Gastrocnemius medialis (tissue), 4 donors: ENCODE measurements at regions of chr2 and their contacts with region 1.

Region 1: GRCh38 chr2:105576440-105577252 is 168.1 kb upstream of the NCK2 start:
- DNase-seq: no peak
- ATAC-seq: peak; percentile 51 to 75
- H3K4me3 ChIP-seq: no peak overlapping the region
- H3K27ac ChIP-seq: peak overlapping the region in 1 of 4 donors; percentile 55
- H3K4me1 ChIP-seq: no peaks in the 10 kb centered on the region
- H3K27me3 ChIP-seq: no peaks in the 10 kb centered on the region
- CTCF ChIP-seq: peak in 4 of 5 experiments; percentile 22 to 64 (median 53)
- POLR2A ChIP-seq: no peak

Region 2: GRCh38 chr2:105379741-105380186 is 196.9 kb before region 1 on chr2:
- in situ Hi-C with region 1: no loop called
- intact Hi-C with region 1: no loop called
- DNase-seq: peak in 1 of 2 donors; percentile 66
- ATAC-seq: peak; percentile 57 to 66
- H3K4me3 ChIP-seq: no peak overlapping the region
- H3K27ac ChIP-seq: peak overlapping the region; percentile 61 to 81 (median 71)
- H3K4me1 ChIP-seq: peaks cover 89 to 94% of the 10 kb centered on the region in 2 donors
- H3K27me3 ChIP-seq: no peaks in the 10 kb centered on the region
- CTCF ChIP-seq: no peak
- POLR2A ChIP-seq: no peak

Region 3: GRCh38 chr2:105487142-105488069 is 89.2 kb before region 1 on chr2:
- in situ Hi-C with region 1: no loop called
- intact Hi-C with region 1: no loop called
- DNase-seq: peak in 1 of 2 donors; percentile 19
- ATAC-seq: peak in 1 of 2 donors; percentile 5
- H3K4me3 ChIP-seq: no peak overlapping the region
- H3K27ac ChIP-seq: peak overlapping the region; percentile 66 to 82 (median 76)
- H3K4me1 ChIP-seq: peaks cover 22 to 24% of the 10 kb centered on the region in 2 donors
- H3K27me3 ChIP-seq: no peaks in the 10 kb centered on the region
- CTCF ChIP-seq: no peak
- POLR2A ChIP-seq: no peak

Region 4: GRCh38 chr2:105498281-105498846 is 78.3 kb before region 1 on chr2:
- in situ Hi-C with region 1: no loop called
- intact Hi-C with region 1: no loop called
- DNase-seq: peak; percentile 51 to 67
- ATAC-seq: peak; percentile 81 to 84
- H3K4me3 ChIP-seq: no peak overlapping the region
- H3K27ac ChIP-seq: peak overlapping the region; percentile 66 to 81 (median 78)
- H3K4me1 ChIP-seq: peaks cover 42 to 46% of the 10 kb centered on the region in 2 donors
- H3K27me3 ChIP-seq: no peaks in the 10 kb centered on the region
- CTCF ChIP-seq: no peak
- POLR2A ChIP-seq: no peak

Region 5: GRCh38 chr2:106065268-106065982 is 488.8 kb after region 1 on chr2:
- in situ Hi-C with region 1: loop called in 1 of 4 experiments (anchors 10 kb)
- intact Hi-C with region 1: loop called (anchors 10 kb)
- DNase-seq: no peak
- ATAC-seq: peak in 1 of 2 donors; percentile 15
- H3K4me3 ChIP-seq: peak overlapping the region; percentile 48 to 60 (median 59)
- H3K27ac ChIP-seq: no peak overlapping the region
- H3K4me1 ChIP-seq: peaks cover 2 to 8% of the 10 kb centered on the region in 2 donors
- H3K27me3 ChIP-seq: no peaks in the 10 kb centered on the region
- CTCF ChIP-seq: no peak
- POLR2A ChIP-seq: no peak

Region 6: GRCh38 chr2:106073678-106074406 is 497.2 kb after region 1 on chr2:
- in situ Hi-C with region 1: loop called in 1 of 4 experiments (anchors 10 kb)
- intact Hi-C with region 1: loop called (anchors 10 kb)
- DNase-seq: peak in 1 of 2 donors; percentile 7
- ATAC-seq: peak; percentile 83 to 91
- H3K4me3 ChIP-seq: peak overlapping the region in 2 of 4 donors; percentile 29 to 41
- H3K27ac ChIP-seq: no peak overlapping the region
- H3K4me1 ChIP-seq: peaks cover 8 to 14% of the 10 kb centered on the region in 2 donors
- H3K27me3 ChIP-seq: no peaks in the 10 kb centered on the region
- CTCF ChIP-seq: no peak
- POLR2A ChIP-seq: no peak

Region 7: DNA sequence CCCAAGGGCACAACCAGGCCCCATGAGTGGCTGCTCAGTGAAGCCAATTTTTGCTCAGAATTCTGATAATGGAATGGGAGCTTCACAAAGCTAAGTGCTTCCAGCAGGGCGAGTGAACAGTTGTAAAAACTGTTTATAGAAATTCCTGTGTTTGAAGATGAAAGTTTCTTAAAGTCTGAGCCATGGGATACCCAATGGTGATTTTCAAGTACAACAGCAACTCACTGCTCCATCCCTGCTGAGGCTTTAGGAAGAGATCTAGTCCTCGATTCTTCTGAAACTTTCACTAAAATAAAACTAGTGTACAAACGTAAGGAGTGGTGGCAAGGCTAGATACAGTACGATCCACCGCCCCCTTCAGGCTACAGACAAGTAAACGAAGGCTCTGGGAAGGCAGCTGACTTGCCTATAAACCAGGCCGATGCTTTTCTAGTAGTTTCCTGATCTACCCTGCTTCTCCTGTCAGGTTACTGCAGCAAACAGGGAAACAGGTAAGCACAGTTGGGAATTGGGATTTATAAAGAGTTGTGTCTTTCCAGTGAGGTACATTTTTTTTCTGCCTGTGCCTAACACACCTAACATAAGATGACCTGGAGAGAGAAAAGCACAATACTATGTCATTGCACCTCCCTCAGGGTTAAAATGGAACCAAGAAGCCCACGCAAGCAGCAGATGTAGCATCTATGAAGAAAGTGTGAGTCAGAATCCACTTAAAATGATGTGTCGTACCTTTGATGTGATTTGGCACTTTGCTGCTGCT is 508.7 kb after region 1 on chr2:
- in situ Hi-C with region 1: loop called in 2 of 4 experiments (anchors 10 kb)
- intact Hi-C with region 1: no loop called
- DNase-seq: no peak
- ATAC-seq: peak in 1 of 2 donors; percentile 42
- H3K4me3 ChIP-seq: no peak overlapping the region
- H3K27ac ChIP-seq: no peak overlapping the region
- H3K4me1 ChIP-seq: no peaks in the 10 kb centered on the region
- H3K27me3 ChIP-seq: no peaks in the 10 kb centered on the region
- CTCF ChIP-seq: peak in 2 of 5 experiments; percentile 27 to 33
- POLR2A ChIP-seq: no peak

Region 8: DNA sequence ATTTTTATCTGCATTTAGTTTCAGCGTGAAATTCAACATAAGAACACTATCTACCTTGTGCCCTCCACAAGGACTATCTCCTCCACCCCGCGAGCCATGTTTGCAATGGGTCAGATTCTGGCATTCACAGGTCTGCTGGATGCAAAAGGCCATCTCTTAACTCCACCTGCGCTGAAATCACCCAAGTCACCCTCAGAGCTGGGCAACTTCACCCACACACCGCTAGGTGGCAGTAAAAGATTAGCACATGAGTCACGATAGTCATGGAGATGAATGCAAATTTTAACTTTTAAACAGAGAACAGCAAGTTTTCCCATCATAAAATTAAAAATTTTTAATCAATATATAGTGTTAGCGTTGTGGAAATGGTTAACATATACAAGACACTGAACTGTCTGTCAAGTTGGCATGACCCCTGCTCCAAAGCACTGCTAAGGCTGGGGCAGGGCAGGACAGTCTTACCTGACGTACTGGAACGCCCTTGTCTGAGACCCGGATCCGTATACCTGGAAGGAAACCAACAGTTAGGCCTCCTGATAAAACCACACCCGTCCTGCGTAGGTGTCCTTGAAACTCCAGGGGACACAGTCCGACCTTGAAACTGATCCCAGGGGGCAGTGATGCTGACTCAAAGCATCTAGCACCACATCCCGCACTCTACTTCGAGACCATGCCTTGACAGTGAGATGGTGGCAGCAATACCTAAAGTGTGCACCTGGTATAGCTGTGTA is 527.9 kb after region 1 on chr2:
- in situ Hi-C with region 1: no loop called
- intact Hi-C with region 1: loop called (anchors 5 kb)
- DNase-seq: peak in 1 of 2 donors; percentile 41
- ATAC-seq: peak; percentile 55 to 59
- H3K4me3 ChIP-seq: no peak overlapping the region
- H3K27ac ChIP-seq: no peak overlapping the region
- H3K4me1 ChIP-seq: peaks cover 6 to 10% of the 10 kb centered on the region in 2 donors
- H3K27me3 ChIP-seq: no peaks in the 10 kb centered on the region
- CTCF ChIP-seq: peak; percentile 78 to 96 (median 89)
- POLR2A ChIP-seq: no peak